Heart left ventricle (tissue), 16 donors: ENCODE measurements at regions of chr18 and their contacts with region 1.

Region 1: DNA sequence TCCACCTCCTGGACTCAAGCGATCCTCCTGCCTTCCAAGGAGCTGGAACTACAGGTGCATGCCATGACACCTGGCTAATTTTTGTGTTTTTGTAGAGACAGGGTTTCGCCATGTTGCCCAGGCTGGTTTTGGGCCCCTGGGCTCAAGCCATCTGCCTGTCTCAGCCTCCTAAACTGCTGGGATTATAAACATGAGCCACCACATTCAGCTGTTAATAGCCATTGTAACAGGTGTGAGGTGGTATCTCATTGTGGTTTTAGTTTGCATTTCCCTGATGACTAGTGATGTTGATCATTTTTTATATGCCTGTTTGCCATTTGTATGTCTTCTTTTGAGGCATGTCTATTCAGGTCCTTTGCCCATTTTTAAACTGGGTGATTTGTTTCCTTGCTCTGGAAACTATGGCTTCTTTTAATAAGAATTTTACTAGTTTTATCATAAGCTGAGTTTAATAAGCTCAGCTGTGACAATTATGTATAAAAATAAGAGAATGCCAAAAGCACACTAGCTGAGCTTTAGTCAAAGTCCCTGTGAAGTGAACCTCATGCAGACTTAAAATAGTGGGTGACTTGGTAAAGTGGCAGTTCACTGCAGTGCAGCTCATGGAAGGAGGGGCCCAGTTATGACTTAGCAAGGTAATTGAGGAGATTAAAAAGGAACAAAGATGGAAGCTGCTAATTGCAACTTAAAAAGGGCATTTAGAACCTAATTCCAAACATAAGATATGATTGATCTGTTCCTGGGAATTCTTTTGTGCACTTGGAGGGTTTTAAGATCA is 465.1 kb downstream of the TGIF1 start:
- DNase-seq: no peak
- ATAC-seq: no peak
- H3K4me3 ChIP-seq: peak overlapping the region in 1 of 12 donors; percentile 27
- H3K27ac ChIP-seq: peak overlapping the region in 1 of 12 donors; percentile 44
- H3K4me1 ChIP-seq: peaks cover 0 to 48% (median 14%) of the 10 kb centered on the region in 12 donors
- H3K27me3 ChIP-seq: no peaks in the 10 kb centered on the region
- CTCF ChIP-seq: no peak
- POLR2A ChIP-seq: no peak

Region 2: GRCh38 chr18:3966985-3967856 is 52.2 kb after region 1 on chr18:
- intact Hi-C with region 1: loop called in 3 of 10 experiments (anchors 5 kb)
- DNase-seq: peak in 4 of 5 donors; percentile 51 to 58 (median 54)
- ATAC-seq: peak; percentile 92 to 97 (median 96)
- H3K4me3 ChIP-seq: no peak overlapping the region
- H3K27ac ChIP-seq: peak overlapping the region in 10 of 12 donors; percentile 7 to 85 (median 64)
- H3K4me1 ChIP-seq: peaks cover 0 to 15% (median 3%) of the 10 kb centered on the region in 12 donors
- H3K27me3 ChIP-seq: no peaks in the 10 kb centered on the region
- CTCF ChIP-seq: peak in 1 of 12 donors; percentile 13
- POLR2A ChIP-seq: no peak